Activated naive CD4-positive, alpha-beta T cell treated with anti-CD3 and anti-CD28 coated beads for 36 hours (primary cell): ENCODE measurements at regions of chr15 and their contacts with region 1.

Region 1: GRCh38 chr15:32663671-32664070 is 22.2 kb downstream of the SCG5 start:
- DNase-seq: no peak
- H3K4me3 Mint-ChIP-seq: no peak overlapping the region
- H3K27ac Mint-ChIP-seq: no peak overlapping the region
- H3K4me1 Mint-ChIP-seq: peaks cover 4% of the 10 kb centered on the region
- H3K27me3 Mint-ChIP-seq: no peaks in the 10 kb centered on the region

Region 2: GRCh38 chr15:32651229-32651837 is 12.3 kb before region 1 on chr15:
- CTCF ChIA-PET with region 1: interaction called, 23 read pairs
- intact Hi-C with region 1: loop called (anchors 1 kb)
- DNase-seq: peak; percentile 61
- H3K4me3 Mint-ChIP-seq: no peak overlapping the region
- H3K27ac Mint-ChIP-seq: no peak overlapping the region
- H3K4me1 Mint-ChIP-seq: no peaks in the 10 kb centered on the region
- H3K27me3 Mint-ChIP-seq: no peaks in the 10 kb centered on the region

Region 3: GRCh38 chr15:32683906-32684584 is 20.4 kb after region 1 on chr15:
- CTCF ChIA-PET with region 1: interaction called, 11 read pairs
- intact Hi-C with region 1: no loop called
- DNase-seq: peak; percentile 13
- H3K4me3 Mint-ChIP-seq: no peak overlapping the region
- H3K27ac Mint-ChIP-seq: no peak overlapping the region
- H3K4me1 Mint-ChIP-seq: peaks cover 5% of the 10 kb centered on the region
- H3K27me3 Mint-ChIP-seq: no peaks in the 10 kb centered on the region

Region 4: GRCh38 chr15:32994810-32995424 is 331.2 kb after region 1 on chr15:
- CTCF ChIA-PET with region 1: interaction called, 34 read pairs
- intact Hi-C with region 1: loop called (anchors 1 kb)
- DNase-seq: no peak
- H3K4me3 Mint-ChIP-seq: no peak overlapping the region
- H3K27ac Mint-ChIP-seq: no peak overlapping the region
- H3K4me1 Mint-ChIP-seq: no peaks in the 10 kb centered on the region
- H3K27me3 Mint-ChIP-seq: peaks cover 11% of the 10 kb centered on the region